ENCODE measurements at regions of chr16 and their contacts with region 1.

Region 1: GRCh38 chr16:57519796-57520360 is 16.5 kb downstream of the CCDC102A start:
- DNase-seq: peak; percentile 89
- ATAC-seq: peak; percentile 81

Region 2: DNA sequence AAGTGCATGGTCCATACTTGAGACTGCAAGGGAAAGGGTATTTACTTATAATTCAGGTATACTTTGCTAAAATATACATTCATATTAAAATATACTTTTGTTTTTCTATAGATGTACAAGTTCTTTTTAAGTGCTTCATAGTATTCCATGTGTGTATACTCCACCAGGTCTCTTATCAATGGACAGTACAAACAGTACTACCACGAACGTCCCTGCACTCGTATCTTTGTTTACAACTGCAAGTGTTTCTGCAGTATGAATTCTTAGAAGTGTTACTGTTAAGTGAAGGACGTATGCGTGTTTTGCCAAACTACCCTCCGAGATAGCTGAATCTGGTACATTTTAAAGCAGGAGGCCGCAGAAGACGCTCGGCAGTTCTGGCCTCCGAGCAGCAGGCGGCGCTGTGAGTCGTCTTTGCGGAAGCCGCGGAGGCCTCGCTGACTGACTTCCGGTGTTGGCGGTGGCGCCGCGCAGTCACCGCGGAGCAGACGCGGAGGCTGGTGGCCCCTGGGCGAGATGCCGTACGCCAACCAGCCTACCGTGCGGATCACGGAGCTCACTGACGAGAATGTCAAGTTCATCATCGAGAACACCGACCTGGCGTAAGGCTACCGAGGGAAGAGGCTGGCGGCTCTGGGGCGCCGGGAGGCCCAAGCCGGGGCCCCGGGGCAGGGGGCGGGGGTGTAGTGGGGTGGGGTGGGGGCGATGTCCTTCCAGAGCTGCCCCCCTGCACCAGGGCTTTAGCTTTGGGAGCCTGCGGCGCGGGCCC is 57.5 kb before region 1 on chr16 and contains the start of gene POLR2C:
- intact Hi-C with region 1: loop called (anchors 10 kb)
- DNase-seq: peak; percentile 94
- ATAC-seq: peak; percentile 89
- total RNA-seq, gene POLR2C: 37.3 TPM

Measured in left ventricle myocardium superior (tissue), 1 donor.